Common myeloid progenitor, CD34-positive (primary cell): ENCODE measurements at regions of chr20 and their contacts with region 1.

Region 1: DNA sequence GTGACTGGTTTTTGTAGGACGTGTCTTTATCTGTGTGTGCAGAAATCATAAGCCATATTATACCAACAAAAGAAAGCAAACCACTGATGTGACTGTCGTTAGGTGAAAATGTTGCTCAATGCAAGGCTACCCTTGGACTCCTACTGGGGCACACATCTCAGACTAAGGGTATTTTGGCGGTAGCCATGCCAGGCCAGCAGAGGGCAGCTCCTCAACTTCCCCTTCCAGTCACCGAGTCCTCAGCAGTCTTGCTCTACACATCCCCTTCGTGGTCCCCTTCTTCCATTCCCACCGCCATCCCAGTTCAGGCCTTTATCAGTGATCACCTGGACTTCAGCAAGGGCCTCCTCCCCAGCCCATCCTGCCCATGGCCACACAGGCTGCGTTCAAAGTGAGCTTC is 113.7 kb upstream of the GGTLC1 start:
- DNase-seq: peak; percentile 30 to 62 (median 61)
- H3K4me3 ChIP-seq: no peak overlapping the region
- H3K27ac ChIP-seq: no peak overlapping the region
- H3K4me1 ChIP-seq: peaks cover 0 to 2% (median 0%) of the 10 kb centered on the region in 4 experiments
- H3K27me3 ChIP-seq: no peaks in the 10 kb centered on the region

Region 2: GRCh38 chr20:24917797-24918578 is 815.7 kb after region 1 on chr20:
- CTCF ChIA-PET with region 1: interaction called, 13 read pairs
- POLR2A ChIA-PET with region 1: no interaction called
- DNase-seq: peak; percentile 66 to 81 (median 79)
- H3K4me3 ChIP-seq: peak overlapping the region in 1 of 7 experiments; percentile 25
- H3K27ac ChIP-seq: no peak overlapping the region
- H3K4me1 ChIP-seq: peaks cover 0 to 13% (median 10%) of the 10 kb centered on the region in 4 experiments
- H3K27me3 ChIP-seq: no peaks in the 10 kb centered on the region